Ascending aorta (tissue), 2 donors: ENCODE measurements at regions of chr7 and their contacts with region 1.

Region 1: DNA sequence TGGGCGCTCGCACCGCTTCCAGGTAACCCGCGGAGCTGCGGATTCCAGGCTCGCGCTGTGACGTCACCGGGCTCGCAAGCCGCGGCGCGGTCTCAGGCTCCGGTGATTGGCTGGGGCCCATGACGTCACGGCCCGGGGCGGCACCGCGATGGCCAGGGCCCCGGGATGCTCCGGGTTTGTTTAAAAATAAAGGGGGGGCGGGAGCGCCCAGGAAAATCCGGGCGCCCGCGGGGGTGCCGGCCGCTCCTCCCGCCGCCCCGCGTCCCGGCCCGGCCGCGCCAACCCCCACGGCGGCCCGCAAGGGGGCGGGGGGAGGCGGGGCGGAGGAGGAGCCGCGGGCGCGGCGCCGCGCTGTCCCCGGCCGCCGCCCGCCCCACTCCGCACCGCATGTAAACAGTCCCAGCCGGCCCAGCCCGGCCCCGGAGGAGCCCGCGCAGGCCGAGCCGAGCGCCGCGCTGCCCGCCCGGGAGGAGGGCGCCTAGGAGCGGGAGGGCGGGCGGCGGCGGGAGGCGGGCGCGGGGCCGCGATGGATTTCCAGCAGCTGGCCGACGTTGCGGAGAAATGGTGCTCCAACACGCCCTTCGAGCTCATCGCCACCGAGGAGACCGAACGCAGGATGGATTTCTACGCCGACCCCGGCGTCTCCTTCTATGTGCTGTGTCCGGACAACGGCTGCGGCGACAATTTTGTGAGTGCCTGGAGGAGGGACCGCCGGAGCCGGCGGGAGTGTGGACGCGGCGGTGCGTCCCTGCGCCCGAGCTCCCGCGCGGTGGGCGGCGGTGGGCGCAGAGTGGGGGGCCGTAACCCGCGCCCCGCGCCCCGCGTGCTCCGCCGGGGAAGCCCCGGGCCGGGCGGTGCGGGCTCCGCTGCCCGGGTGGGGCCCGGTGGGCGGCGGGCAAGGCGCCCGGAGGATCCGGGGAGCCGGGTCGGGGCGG is at the start of gene MTURN:
- DNase-seq: peak; percentile 56 to 94
- H3K4me3 ChIP-seq: peak within 1 kb of the TSS; percentile 84 to 85
- H3K27ac ChIP-seq: peak within 1 kb of the TSS; percentile 89 to 96
- H3K4me1 ChIP-seq: peaks cover 9 to 13% of the 10 kb centered on the region in 2 donors
- H3K27me3 ChIP-seq: no peaks in the 10 kb centered on the region
- CTCF ChIP-seq: peak in 1 of 3 experiments; percentile 10
- total RNA-seq, gene MTURN: 40.9 TPM

Region 2: DNA sequence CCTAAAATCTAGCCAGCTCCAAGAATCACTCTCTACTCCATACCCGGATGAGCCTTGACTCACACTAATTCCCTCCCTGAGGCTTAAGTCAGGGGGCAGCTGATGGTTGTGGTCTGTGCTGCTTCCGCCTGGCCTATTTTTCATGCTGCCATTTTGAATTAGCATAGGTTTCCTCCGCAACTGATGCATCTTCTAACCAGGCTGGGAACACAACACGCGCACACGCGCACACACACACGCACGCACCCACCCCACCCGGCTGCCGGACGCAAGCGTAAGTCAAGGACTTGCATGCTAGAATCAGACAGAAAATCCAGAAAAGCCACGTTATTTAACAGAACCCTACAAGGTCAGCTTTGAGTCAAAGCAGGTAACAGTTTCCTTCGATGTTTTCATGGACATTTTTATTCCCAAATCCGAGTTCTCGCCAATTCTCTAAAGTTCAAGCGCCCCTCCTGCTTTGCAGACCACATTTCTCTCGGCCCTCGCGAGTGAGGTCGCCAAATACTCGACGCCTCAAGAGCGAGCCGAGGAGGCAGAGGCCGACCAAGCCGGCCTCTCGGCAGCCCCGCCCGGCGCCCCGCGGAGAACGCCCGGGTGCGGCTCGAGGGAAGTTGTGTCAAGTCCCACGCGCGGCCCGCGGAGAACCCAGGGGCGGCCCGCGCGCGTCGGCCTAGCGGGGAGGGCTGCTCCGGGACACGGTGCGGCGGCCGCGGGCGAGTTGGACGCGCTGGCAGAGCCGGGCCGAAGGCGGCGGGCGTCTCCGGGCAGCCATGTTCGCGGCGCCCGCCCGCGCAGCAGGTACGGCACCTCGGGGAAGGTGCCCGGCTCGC is 146.2 kb before region 1 on chr7:
- intact Hi-C with region 1: loop called (anchors 1 kb)
- DNase-seq: peak in 1 of 2 donors; percentile 68
- H3K4me3 ChIP-seq: peak overlapping the region; percentile 94 to 97
- H3K27ac ChIP-seq: peak overlapping the region; percentile 97
- H3K4me1 ChIP-seq: peaks cover 0 to 9% of the 10 kb centered on the region in 2 donors
- H3K27me3 ChIP-seq: no peaks in the 10 kb centered on the region
- CTCF ChIP-seq: no peak

Region 3: DNA sequence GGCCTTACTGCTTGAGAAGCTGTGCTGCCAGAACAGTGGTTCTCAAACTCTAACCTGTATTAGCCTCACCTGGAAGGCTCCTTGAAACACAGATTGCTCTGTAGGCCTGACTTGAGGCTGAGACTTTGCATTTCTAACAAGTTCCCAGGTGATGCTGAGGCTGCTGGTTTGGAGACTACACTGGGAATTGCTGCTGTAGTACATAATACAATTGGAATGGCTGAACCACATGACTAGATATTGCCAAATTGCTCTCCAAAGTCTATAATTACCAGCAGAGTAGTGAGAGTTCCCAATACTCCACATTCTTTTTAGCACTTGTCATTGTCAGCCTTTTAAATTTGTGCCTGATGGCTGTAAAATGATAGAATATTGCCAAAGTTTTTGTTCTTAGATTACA is 66.8 kb before region 1 on chr7:
- intact Hi-C with region 1: loop called (anchors 5 kb)
- DNase-seq: no peak
- H3K4me3 ChIP-seq: no peak overlapping the region
- H3K27ac ChIP-seq: peak overlapping the region; percentile 12 to 17
- H3K4me1 ChIP-seq: peaks cover 0 to 12% of the 10 kb centered on the region in 2 donors
- H3K27me3 ChIP-seq: no peaks in the 10 kb centered on the region
- CTCF ChIP-seq: no peak

Region 4: DNA sequence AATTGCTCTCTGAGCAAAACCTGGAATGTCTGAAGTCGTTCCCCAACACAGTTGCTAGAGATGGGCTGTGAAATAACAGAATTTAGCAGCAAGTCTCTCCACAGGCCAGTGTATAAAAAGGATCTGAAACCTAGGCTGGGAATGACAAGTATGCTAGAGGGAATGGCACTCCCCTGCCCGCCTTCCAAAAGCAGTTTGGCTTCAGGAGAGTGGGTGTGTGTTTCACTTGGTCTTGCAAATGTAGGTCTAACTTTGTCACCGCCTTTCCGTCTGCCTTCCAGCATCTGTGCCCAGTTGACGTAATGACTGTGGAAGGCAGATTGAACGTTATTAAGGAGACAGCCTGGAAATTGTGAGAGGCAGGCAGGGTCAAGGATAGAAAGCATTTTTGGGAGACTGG is 18.1 kb before region 1 on chr7:
- intact Hi-C with region 1: loop called (anchors 2 kb)
- DNase-seq: peak; percentile 18 to 92
- H3K4me3 ChIP-seq: no peak overlapping the region
- H3K27ac ChIP-seq: peak overlapping the region; percentile 62 to 84
- H3K4me1 ChIP-seq: peaks cover 0 to 11% of the 10 kb centered on the region in 2 donors
- H3K27me3 ChIP-seq: no peaks in the 10 kb centered on the region
- CTCF ChIP-seq: no peak

Region 5: DNA sequence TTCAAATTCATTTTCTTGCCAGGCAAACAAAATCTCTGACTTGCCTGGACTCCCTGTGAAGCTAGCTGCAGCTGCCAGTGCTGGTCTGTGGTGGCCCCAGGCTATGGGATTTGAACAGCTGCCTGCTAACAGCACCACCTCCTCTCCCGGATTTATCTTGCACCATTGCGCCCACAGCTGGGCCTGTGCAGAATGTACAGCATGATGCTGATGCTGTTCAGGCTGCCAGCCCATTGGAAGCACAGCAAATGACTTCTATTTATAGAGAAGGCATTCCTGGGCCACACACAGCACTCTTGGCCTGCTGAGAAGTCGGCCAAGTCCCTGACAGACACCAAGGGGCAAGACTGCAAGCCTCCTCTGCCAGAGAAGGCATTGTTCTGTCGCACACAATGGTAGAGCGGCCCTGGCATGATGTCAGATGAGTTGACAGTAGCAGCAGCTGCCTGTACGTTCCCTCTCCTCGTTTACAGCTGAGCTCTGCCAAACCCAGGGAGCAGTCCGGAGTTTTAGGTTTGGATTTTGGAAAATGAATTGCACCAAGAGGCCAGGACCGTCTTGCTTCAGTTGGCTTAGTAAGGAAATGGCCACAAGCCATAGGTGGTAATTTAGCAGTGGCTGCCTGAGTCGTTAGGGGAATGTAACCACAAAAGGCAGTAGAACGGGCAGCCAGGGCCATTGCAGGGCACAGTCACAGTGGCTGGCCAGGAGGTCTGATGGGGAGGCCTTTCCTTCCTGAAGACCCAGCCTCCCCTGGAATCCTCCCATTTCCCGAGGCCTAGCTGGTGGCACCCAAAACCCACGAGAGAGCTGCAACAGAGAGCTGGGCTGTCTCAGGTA is 38.4 kb after region 1 on chr7:
- intact Hi-C with region 1: loop called (anchors 2 kb)
- DNase-seq: peak; percentile 40 to 90
- H3K4me3 ChIP-seq: peak overlapping the region in 1 of 2 donors; percentile 34
- H3K27ac ChIP-seq: peak overlapping the region; percentile 66 to 86
- H3K4me1 ChIP-seq: peaks cover 32 to 69% of the 10 kb centered on the region in 2 donors
- H3K27me3 ChIP-seq: no peaks in the 10 kb centered on the region
- CTCF ChIP-seq: peak in 1 of 3 experiments; percentile 35

Region 6: DNA sequence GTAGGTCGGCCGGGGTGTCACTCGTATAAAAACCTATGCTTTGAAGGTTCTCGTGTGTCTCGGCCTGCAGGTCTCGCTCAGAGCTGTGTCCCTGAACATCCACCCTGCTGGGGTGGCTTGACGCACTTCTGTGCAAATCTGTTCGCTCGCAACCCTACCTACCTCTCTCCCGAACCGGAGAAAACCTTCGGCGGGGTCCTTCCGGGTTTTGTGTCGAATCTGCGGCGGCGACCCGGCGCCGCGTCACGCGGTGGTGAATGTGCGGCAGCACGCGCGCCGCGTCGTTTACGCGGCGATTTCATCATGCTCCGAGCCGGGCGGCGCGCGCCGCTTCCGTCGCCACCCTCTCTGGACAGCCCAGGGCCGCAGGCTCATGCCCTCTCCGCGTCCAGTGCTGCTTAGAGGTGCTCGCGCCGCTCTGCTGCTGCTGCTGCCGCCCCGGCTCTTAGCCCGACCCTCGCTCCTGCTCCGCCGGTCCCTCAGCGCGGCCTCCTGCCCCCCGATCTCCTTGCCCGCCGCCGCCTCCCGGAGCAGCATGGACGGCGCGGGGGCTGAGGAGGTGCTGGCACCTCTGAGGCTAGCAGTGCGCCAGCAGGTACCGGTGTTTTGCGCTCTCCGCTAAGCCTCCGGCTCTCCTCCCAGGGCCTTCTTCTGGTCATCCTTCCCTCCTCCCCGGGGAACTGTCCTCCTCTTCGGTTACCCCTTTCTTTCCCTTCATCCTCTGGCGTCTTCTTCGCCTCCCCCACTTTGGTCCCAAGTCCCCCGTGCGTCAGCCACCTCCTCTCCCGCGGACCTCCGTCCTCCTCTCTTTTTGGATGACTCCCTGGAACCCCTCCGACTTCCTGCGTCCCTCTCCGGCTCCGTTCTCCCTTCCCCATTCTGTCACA is 459.9 kb after region 1 on chr7 and contains the start of gene GARS1:
- intact Hi-C with region 1: loop called (anchors 10 kb)
- DNase-seq: peak; percentile 65 to 94
- H3K4me3 ChIP-seq: peak within 1 kb of the TSS; percentile 86 to 96
- H3K27ac ChIP-seq: peak within 1 kb of the TSS; percentile 93 to 98
- H3K4me1 ChIP-seq: peaks cover 4 to 18% of the 10 kb centered on the region in 2 donors
- H3K27me3 ChIP-seq: no peaks in the 10 kb centered on the region
- CTCF ChIP-seq: no peak
- total RNA-seq, gene GARS1: 41.7 TPM